Astrocyte of the cerebellum (primary cell): ENCODE measurements at regions of chr10 and their contacts with region 1.

Region 1: DNA sequence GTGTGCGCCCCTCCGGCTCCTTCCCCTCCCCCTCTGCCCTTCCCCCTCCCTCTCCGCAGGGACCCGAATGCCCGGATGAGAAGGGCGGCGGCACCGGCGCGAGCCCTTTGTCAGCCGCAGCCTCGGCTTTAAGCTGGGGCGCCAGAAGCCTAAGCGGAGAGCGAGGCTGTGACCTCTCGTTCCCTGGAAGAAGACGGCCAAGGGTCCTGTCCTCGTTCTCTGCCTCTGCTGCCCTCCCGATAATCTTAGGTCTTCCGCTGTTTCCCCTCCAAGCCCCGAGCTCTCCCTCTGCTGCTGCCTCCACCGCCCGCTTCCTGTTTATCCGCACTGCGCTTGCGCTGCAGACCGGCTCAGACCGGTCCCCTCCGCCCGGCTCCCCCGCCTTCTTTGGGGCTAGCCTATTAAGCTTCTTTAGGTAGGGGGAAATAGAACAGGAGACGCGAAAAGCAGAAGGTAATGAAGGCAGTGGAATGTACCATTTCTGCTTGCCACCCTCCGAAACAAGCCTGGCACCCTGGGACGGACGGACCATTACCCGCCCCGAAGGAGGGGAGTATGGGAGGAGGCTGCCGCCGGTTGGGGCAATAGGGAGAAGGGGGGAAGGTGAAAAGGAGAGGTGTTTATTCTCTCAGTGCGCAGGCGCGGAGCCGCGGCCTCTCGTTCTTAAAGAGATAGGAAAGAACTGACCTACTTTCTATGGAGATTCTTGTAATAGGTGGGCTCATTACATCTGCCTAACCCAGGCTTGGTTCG is at the start of gene OGA:
- DNase-seq: peak; percentile 100
- H3K4me3 ChIP-seq: peak within 1 kb of the TSS; percentile 97
- CTCF ChIP-seq: no peak

Region 2: DNA sequence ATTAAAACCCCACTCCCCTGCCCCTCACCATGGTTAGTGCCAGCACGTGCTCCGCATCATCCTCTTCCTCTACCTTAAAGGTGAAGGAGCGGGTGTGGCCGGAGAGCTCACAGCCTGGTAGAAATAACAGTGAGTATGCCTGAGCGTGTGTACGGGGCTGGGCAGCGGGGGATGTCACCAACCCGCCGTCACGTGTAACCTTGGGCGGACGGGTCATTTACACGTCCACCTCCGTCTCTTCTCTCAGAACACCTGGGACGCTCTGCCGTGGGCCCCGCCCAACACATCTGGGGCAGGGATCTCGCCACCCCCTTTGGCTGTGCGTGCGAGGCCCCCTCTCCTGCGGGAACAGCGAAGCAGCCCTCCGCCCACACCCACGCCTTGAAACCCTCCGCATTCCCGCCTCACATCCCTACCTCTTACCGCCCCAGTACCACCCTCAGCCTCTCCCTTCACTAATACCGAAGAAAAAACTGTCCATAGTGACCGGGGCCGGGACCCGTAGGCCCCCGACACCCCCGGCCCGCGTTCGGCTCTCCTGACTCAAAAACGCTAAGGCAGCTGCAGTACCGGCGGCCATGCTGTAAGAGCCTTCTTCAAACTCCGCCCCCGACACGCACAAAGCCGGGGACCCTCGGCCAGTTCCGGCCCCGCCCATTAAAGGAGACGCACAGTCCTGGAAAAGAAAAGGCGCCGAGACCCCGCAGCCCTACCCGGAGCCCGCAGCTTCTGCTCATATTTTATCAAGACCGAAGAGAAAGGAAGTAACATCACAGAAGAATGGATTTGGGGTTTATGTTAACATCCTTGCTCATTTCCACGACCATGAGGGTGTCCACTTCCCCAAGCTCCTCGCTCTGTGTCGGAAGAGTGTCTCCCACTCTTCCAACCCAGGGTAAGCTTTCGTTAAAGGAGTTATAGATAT is 35.2 kb before region 1 on chr10 and contains the start of gene NPM3:
- in situ Hi-C with region 1: loop called (anchors 5 kb)
- DNase-seq: peak; percentile 16
- H3K4me3 ChIP-seq: peak within 1 kb of the TSS; percentile 90
- CTCF ChIP-seq: no peak

Region 3: GRCh38 chr10:101903827-101904550 is 85.7 kb after region 1 on chr10:
- in situ Hi-C with region 1: no loop called
- DNase-seq: no peak
- H3K4me3 ChIP-seq: no peak overlapping the region
- CTCF ChIP-seq: no peak